CD4-positive, alpha-beta T cell (primary cell): ENCODE measurements at regions of chr19 and their contacts with region 1.

Region 1: DNA sequence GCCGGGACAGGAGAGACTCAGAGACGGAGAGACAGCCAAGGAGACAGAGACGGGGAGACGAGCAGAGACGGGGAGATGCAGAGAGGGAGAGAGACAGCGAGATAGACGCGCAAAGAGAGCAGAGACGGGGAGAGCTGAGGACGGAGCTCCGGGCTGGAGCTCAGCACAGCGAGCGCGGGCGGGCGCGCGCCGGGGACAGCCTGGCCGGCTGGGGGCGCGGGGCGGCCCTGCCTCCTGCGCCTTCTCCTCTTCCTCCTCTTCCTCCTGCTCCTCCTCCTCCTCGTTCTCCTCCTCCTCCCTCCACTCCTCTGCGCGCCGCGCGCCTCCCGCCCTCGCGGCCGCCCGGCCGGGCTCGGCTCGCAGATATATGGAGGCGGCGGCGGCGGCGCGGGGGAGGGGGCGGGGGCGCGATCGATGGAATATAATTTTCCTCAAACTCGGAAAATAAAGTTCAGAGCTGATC is at the start of gene ERFL:
- DNase-seq: peak in 3 of 14 experiments; percentile 54 to 64 (median 56)
- ATAC-seq: peak; percentile 18
- H3K4me3 ChIP-seq: peak within 1 kb of the TSS; percentile 71
- H3K4me3 Mint-ChIP-seq: peak within 1 kb of the TSS; percentile 90
- H3K27ac ChIP-seq: peak within 1 kb of the TSS in 1 of 2 donors; percentile 42
- H3K27ac Mint-ChIP-seq: peak within 1 kb of the TSS; percentile 86
- H3K4me1 ChIP-seq: peaks cover 34% of the 10 kb centered on the region
- H3K4me1 Mint-ChIP-seq: peaks cover 35% of the 10 kb centered on the region
- H3K27me3 ChIP-seq: no peaks in the 10 kb centered on the region
- H3K27me3 Mint-ChIP-seq: no peaks in the 10 kb centered on the region
- CTCF ChIP-seq: no peak
- total RNA-seq, gene ERFL: 7.7 to 8.9 TPM

Region 2: GRCh38 chr19:41837981-41838708 is 90.1 kb before region 1 on chr19:
- CTCF ChIA-PET with region 1: no interaction called
- POLR2A ChIA-PET with region 1: no interaction called
- intact Hi-C with region 1: no loop called
- DNase-seq: no peak
- ATAC-seq: no peak
- H3K4me3 ChIP-seq: no peak overlapping the region
- H3K4me3 Mint-ChIP-seq: no peak overlapping the region
- H3K27ac ChIP-seq: no peak overlapping the region
- H3K27ac Mint-ChIP-seq: no peak overlapping the region
- H3K4me1 ChIP-seq: no peaks in the 10 kb centered on the region
- H3K4me1 Mint-ChIP-seq: no peaks in the 10 kb centered on the region
- H3K27me3 ChIP-seq: peaks cover 13 to 18% of the 10 kb centered on the region in 2 experiments
- H3K27me3 Mint-ChIP-seq: peaks cover 41% of the 10 kb centered on the region
- CTCF ChIP-seq: no peak

Region 3: GRCh38 chr19:41912899-41913537 is 15.2 kb before region 1 on chr19:
- CTCF ChIA-PET with region 1: no interaction called
- POLR2A ChIA-PET with region 1: interaction called, 21 read pairs
- intact Hi-C with region 1: loop called in 1 of 2 experiments (anchors 2 kb)
- DNase-seq: peak in 3 of 14 experiments; percentile 50 to 58 (median 55)
- ATAC-seq: peak; percentile 35
- H3K4me3 ChIP-seq: no peak overlapping the region
- H3K4me3 Mint-ChIP-seq: no peak overlapping the region
- H3K27ac ChIP-seq: no peak overlapping the region
- H3K27ac Mint-ChIP-seq: peak overlapping the region; percentile 87
- H3K4me1 ChIP-seq: peaks cover 68% of the 10 kb centered on the region
- H3K4me1 Mint-ChIP-seq: peaks cover 37% of the 10 kb centered on the region
- H3K27me3 ChIP-seq: peaks cover 38 to 42% of the 10 kb centered on the region in 2 experiments
- H3K27me3 Mint-ChIP-seq: peaks cover 10% of the 10 kb centered on the region
- CTCF ChIP-seq: no peak

Region 4: DNA sequence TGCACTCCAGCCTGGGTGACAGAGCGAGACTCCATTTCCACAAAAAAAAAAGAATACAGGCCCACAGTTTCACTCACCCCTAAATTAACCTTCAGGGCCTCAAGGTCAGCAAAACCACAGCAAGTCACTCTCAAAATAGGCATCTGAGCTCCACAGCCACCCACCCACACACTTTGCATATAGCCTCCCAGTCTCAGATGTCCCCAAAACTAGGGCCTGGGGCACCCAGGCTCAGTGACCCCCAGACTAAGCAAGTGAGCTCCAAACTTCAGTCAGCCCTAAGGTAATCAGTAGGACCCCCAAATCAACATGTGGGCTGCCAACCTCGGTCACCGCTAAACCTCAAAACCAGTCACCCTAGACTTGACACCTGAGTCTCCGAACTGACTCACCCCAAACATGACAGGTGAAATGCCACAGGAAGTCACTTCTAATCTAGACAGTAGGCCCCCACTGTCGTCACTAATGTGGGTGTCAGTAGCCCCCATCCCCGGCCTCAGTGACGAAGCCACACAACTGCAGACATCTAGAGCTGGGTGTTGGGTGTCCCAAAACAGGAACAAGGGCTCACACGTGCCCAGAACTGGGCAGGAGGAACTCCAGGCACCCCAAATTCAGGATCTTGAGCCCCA is 17.0 kb after region 1 on chr19:
- CTCF ChIA-PET with region 1: no interaction called
- POLR2A ChIA-PET with region 1: interaction called, 6 read pairs
- intact Hi-C with region 1: loop called in 1 of 2 experiments (anchors 2 kb)
- DNase-seq: peak; percentile 74 to 96 (median 84)
- ATAC-seq: peak; percentile 88
- H3K4me3 ChIP-seq: no peak overlapping the region
- H3K4me3 Mint-ChIP-seq: peak overlapping the region; percentile 76
- H3K27ac ChIP-seq: peak overlapping the region; percentile 60 to 67
- H3K27ac Mint-ChIP-seq: peak overlapping the region; percentile 98
- H3K4me1 ChIP-seq: peaks cover 46% of the 10 kb centered on the region
- H3K4me1 Mint-ChIP-seq: peaks cover 56% of the 10 kb centered on the region
- H3K27me3 ChIP-seq: peaks cover 0 to 3% of the 10 kb centered on the region in 2 experiments
- H3K27me3 Mint-ChIP-seq: no peaks in the 10 kb centered on the region
- CTCF ChIP-seq: no peak

Region 5: DNA sequence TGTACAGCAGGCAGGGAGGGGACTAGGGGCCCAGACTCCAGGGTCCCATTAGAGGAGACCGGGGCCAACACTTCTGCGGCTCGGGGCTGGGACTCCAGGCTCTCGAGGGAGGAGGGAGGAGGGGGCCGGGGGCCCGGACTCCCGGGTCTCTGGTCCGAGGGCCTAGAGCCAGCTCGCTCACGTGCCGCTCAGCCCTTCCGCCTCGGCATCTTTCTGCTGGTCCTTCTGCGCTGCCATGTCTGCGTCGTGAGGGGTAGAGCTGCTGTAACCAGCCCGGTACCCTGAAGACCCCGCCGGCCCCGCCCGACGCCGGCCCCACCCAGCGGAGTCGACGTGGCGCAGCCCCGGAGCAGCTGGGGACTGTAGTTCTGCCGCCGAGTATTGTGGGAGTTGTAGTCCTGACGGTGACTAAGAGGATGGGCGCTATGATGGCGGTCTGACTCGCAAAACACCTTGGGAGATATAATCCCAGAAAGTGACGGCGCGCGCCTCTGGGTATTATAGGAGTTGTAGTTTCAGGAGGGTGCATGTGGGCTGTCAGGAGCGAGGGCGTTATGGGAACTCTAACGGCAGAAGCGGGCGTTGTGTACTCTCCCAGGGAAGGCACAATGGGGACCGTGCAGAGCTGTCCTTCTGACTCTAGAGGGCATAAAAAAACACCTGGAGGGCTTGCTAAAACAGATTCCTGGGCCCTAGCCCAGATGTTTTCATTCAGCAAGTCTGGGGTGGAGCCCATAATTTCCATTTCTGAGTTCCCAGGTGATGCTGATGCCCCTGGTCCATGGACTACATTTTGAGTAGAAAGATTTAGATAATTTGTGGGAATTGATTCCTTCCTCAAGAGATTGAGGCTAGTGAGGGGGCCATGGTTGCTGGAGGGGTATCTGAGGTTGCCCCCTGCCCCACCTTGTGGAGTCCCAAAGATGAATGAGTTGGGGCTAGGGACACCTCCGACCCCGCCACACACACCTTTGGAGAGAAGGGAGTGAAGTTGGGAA is 31.1 kb after region 1 on chr19 and contains the start of gene RABAC1:
- CTCF ChIA-PET with region 1: no interaction called
- POLR2A ChIA-PET with region 1: no interaction called
- intact Hi-C with region 1: no loop called
- DNase-seq: peak; percentile 76 to 93 (median 86)
- ATAC-seq: peak; percentile 85
- H3K4me3 ChIP-seq: peak within 1 kb of the TSS; percentile 93
- H3K4me3 Mint-ChIP-seq: peak within 1 kb of the TSS; percentile 91
- H3K27ac ChIP-seq: peak within 1 kb of the TSS; percentile 81 to 87
- H3K27ac Mint-ChIP-seq: peak within 1 kb of the TSS; percentile 78
- H3K4me1 ChIP-seq: peaks cover 24% of the 10 kb centered on the region
- H3K4me1 Mint-ChIP-seq: peaks cover 23% of the 10 kb centered on the region
- H3K27me3 ChIP-seq: no peaks in the 10 kb centered on the region
- H3K27me3 Mint-ChIP-seq: no peaks in the 10 kb centered on the region
- CTCF ChIP-seq: no peak
- total RNA-seq, gene RABAC1: 96.0 to 102 TPM

Region 6: DNA sequence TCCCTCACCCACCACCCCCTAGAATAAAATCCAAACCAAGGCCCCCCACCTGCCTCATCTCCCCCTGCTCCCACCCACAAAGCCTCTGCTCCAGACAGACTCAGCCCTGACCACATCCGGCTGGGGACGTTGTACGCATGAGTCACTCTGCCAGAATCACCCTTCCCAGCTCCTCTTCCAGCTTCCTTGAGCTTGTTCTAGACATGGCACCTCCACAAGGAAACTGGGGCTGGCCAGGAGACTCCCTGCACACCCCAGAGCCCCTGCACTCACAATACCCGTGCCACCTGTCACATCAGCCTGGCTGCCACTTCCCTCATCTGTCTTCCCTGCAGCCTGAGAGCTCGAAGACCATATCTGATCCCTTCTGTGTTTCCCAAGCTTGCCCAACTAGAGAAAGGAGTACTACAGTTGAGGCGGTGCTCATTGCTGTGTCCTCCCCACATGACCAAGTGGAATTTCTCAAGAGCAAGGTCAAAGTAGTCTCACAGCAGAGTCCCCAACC is 279.6 kb after region 1 on chr19:
- CTCF ChIA-PET with region 1: no interaction called
- POLR2A ChIA-PET with region 1: no interaction called
- intact Hi-C with region 1: no loop called
- DNase-seq: peak in 4 of 14 experiments; percentile 26 to 69 (median 48)
- ATAC-seq: peak; percentile 62
- H3K4me3 ChIP-seq: no peak overlapping the region
- H3K4me3 Mint-ChIP-seq: peak overlapping the region; percentile 70
- H3K27ac ChIP-seq: peak overlapping the region; percentile 12 to 50
- H3K27ac Mint-ChIP-seq: peak overlapping the region; percentile 89
- H3K4me1 ChIP-seq: peaks cover 89% of the 10 kb centered on the region
- H3K4me1 Mint-ChIP-seq: peaks cover 67% of the 10 kb centered on the region
- H3K27me3 ChIP-seq: no peaks in the 10 kb centered on the region
- H3K27me3 Mint-ChIP-seq: no peaks in the 10 kb centered on the region
- CTCF ChIP-seq: no peak